A549 (cell line): ENCODE measurements at regions of chr19 and their contacts with region 1.

Region 1: DNA sequence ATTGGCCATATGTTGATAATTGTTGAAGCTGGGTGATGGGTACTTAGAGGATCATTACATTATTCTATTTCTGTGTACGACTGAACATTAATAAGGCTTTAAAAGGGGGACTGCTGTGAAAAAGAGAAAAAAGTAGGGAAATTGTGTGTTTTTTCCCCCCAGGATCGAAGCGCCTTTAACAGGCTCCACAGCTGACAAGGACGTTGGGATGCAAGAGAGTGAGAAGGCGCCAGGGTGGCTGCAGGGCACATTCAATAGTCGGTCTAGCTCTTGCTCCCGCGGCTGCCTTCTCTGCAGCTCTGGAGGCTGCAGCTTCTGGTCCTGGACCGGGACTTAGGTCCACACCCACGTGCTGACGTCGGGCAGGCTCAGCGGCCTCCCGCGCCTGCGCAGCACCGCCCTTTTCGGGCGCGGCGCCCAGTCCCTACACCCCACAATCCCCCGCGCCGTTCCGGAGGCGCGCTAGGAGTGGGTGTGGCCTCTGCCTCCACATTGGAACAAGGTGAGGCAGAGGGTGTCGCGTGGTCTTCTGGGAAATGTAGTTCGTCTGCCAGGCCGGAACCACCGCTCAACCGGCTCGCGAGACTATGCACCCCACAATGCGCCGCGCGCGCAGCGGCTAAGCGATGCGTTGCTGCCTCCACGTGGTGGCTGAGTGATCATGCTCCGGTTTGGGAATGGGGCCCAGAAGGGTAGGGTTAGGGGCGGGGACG is 4.9 kb upstream of the LRFN3 start:
- DNase-seq: peak; percentile 100
- ATAC-seq: peak; percentile 90 to 98
- H3K4me3 ChIP-seq: peak overlapping the region; percentile 39
- H3K27ac ChIP-seq: peak overlapping the region; percentile 75 to 79
- H3K4me1 ChIP-seq: peaks cover 15% of the 10 kb centered on the region
- CTCF ChIP-seq: peak; percentile 100
- EP300 ChIP-seq: no peak
- POLR2A ChIP-seq: peak; percentile 100
- RAD21 ChIP-seq: peak; percentile 100

Region 2: GRCh38 chr19:35702223-35703012 is 228.9 kb before region 1 on chr19:
- CTCF ChIA-PET with region 1: interaction called, 19 read pairs
- POLR2A ChIA-PET with region 1: interaction called, 7 read pairs
- DNase-seq: peak; percentile 100
- ATAC-seq: peak; percentile 98 to 99
- H3K4me3 ChIP-seq: peak overlapping the region; percentile 53
- H3K27ac ChIP-seq: peak overlapping the region; percentile 52 to 80
- H3K4me1 ChIP-seq: no peaks in the 10 kb centered on the region
- CTCF ChIP-seq: no peak
- EP300 ChIP-seq: no peak
- POLR2A ChIP-seq: peak; percentile 41
- RAD21 ChIP-seq: no peak

Region 3: GRCh38 chr19:35748106-35749020 is 183.0 kb before region 1 on chr19 and contains the start of gene LIN37:
- CTCF ChIA-PET with region 1: interaction called, 24 read pairs
- POLR2A ChIA-PET with region 1: interaction called, 4 read pairs
- DNase-seq: peak; percentile 100
- ATAC-seq: peak; percentile 75 to 86
- H3K4me3 ChIP-seq: peak within 1 kb of the TSS; percentile 75
- H3K27ac ChIP-seq: peak within 1 kb of the TSS; percentile 76 to 87
- H3K4me1 ChIP-seq: peaks cover 28% of the 10 kb centered on the region
- CTCF ChIP-seq: no peak
- EP300 ChIP-seq: no peak
- POLR2A ChIP-seq: peak; percentile 88
- RAD21 ChIP-seq: no peak
- polyA plus RNA-seq, gene LIN37: 8.1 and 11.5 TPM in 2 replicates

Region 4: GRCh38 chr19:35882114-35882832 is 49.0 kb before region 1 on chr19:
- CTCF ChIA-PET with region 1: interaction called, 402 read pairs
- POLR2A ChIA-PET with region 1: interaction called, 6 read pairs
- DNase-seq: peak; percentile 87 to 91
- ATAC-seq: peak; percentile 55 to 56; a peak in 4 of 6 replicates
- H3K4me3 ChIP-seq: no peak overlapping the region
- H3K27ac ChIP-seq: no peak overlapping the region
- H3K4me1 ChIP-seq: peaks cover 7% of the 10 kb centered on the region
- CTCF ChIP-seq: peak; percentile 98
- EP300 ChIP-seq: no peak
- POLR2A ChIP-seq: no peak
- RAD21 ChIP-seq: peak; percentile 96 to 97

Region 5: GRCh38 chr19:35908973-35909683 is 22.2 kb before region 1 on chr19:
- CTCF ChIA-PET with region 1: interaction called, 29 read pairs
- POLR2A ChIA-PET with region 1: interaction called, 5 read pairs
- DNase-seq: no peak
- ATAC-seq: 0 out of 6 replicates have a peak, but pooled peaks of 1 of the 2 experiments have one; percentile 19
- H3K4me3 ChIP-seq: no peak overlapping the region
- H3K27ac ChIP-seq: no peak overlapping the region
- H3K4me1 ChIP-seq: peaks cover 8% of the 10 kb centered on the region; the same call in 2 of the 3 replicates
- CTCF ChIP-seq: no peak
- EP300 ChIP-seq: no peak
- POLR2A ChIP-seq: no peak
- RAD21 ChIP-seq: no peak

Region 6: GRCh38 chr19:35921012-35921411 is 10.3 kb before region 1 on chr19:
- CTCF ChIA-PET with region 1: interaction called, 29 read pairs
- POLR2A ChIA-PET with region 1: no interaction called
- DNase-seq: no peak
- ATAC-seq: no peak
- H3K4me3 ChIP-seq: no peak overlapping the region
- H3K27ac ChIP-seq: no peak overlapping the region
- H3K4me1 ChIP-seq: no peaks in the 10 kb centered on the region
- CTCF ChIP-seq: no peak
- EP300 ChIP-seq: no peak
- POLR2A ChIP-seq: no peak
- RAD21 ChIP-seq: no peak

Region 7: DNA sequence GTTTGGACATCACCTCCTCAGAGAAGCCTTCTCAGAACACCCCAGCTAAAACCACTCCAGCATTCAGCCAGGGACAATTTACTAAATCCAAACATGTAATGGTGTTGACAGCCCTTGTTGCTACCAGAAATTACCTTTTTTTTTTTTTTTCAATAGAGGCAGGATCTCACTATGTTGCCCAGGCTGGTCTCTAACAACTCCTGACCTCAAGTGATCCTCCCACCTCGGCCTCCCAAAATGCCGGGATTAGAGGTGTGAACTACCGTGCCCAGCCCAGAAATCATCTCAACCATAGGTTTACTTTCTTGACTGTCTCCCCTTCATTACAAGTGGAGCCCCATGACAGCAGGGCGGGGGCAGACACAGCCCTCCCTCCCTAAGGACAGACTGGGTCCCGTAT is 92.1 kb after region 1 on chr19:
- CTCF ChIA-PET with region 1: no interaction called
- POLR2A ChIA-PET with region 1: no interaction called
- DNase-seq: no peak
- ATAC-seq: no peak
- H3K4me3 ChIP-seq: no peak overlapping the region
- H3K27ac ChIP-seq: no peak overlapping the region
- H3K4me1 ChIP-seq: no peaks in the 10 kb centered on the region
- CTCF ChIP-seq: no peak
- EP300 ChIP-seq: no peak
- POLR2A ChIP-seq: no peak
- RAD21 ChIP-seq: no peak

Region 8: GRCh38 chr19:36172852-36173251 is 241.5 kb after region 1 on chr19:
- CTCF ChIA-PET with region 1: no interaction called
- POLR2A ChIA-PET with region 1: no interaction called
- DNase-seq: no peak
- ATAC-seq: no peak
- H3K4me3 ChIP-seq: no peak overlapping the region
- H3K27ac ChIP-seq: no peak overlapping the region
- H3K4me1 ChIP-seq: 0 out of 3 replicates have a peak, but pooled peaks cover 3% of the 10 kb centered on the region
- CTCF ChIP-seq: no peak
- EP300 ChIP-seq: no peak
- POLR2A ChIP-seq: no peak
- RAD21 ChIP-seq: no peak